ENCODE measurements at regions of chr20 and their contacts with region 1.

Region 1: DNA sequence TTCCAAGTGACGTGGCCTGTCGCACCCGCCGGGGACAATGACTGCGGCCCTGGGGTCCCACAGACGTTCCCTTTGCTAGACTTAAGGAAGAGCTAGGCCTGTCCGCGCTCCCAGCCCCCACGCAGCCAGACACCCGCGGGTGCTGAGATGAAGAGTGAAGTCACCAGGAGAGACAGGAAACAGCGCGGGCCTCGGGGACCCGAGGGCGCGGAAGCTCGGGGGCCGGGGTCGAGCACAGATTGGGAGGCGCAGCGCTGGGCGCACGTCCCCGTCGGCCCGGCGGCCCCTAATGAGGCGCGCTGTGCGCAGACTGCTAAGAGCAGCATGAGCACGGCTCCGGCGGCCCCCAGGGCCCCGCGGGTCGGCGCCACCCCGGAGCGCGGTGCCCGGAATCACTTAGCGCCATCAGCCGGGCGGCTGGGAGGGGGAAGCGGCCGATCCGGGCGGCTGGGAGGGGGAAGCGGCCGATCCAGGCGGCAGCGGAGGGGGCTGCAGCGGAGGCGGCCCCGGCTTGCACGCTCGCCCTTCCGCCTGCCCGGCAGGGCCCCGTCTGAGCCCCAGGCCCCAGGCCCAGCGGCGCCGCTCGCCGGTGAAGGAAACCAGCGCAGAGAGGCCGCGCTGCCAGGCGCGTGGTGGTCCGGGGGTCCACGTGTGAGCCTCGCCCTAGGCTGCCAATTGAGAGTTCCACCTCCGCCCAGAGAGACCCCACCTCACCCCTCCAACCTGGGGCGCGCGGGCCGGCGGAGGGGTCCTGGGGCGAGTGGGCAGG is 8.3 kb upstream of the AVP start:
- DNase-seq: peak; percentile 23 to 76 (median 52)
- ATAC-seq: peak; percentile 39
- H3K4me3 ChIP-seq: peak overlapping the region; percentile 33 to 61
- H3K4me3 Mint-ChIP-seq: peak overlapping the region; percentile 88
- H3K27ac ChIP-seq: peak overlapping the region; percentile 77 to 90
- H3K27ac Mint-ChIP-seq: peak overlapping the region; percentile 100
- H3K4me1 ChIP-seq: peaks cover 43% of the 10 kb centered on the region
- H3K4me1 Mint-ChIP-seq: peaks cover 29% of the 10 kb centered on the region
- H3K27me3 ChIP-seq: peaks cover 0 to 14% of the 10 kb centered on the region in 2 experiments
- H3K27me3 Mint-ChIP-seq: peaks cover 8% of the 10 kb centered on the region
- CTCF ChIP-seq: no peak

Region 2: GRCh38 chr20:3068986-3069900 is 23.6 kb before region 1 on chr20:
- CTCF ChIA-PET with region 1: interaction called, 6 read pairs
- POLR2A ChIA-PET with region 1: interaction called, 11 read pairs
- intact Hi-C with region 1: loop called in 1 of 2 experiments (anchors 1 kb)
- DNase-seq: peak in 6 of 9 experiments; percentile 45 to 73 (median 64)
- ATAC-seq: peak; percentile 59
- H3K4me3 ChIP-seq: no peak overlapping the region
- H3K4me3 Mint-ChIP-seq: no peak overlapping the region
- H3K27ac ChIP-seq: no peak overlapping the region
- H3K27ac Mint-ChIP-seq: no peak overlapping the region
- H3K4me1 ChIP-seq: peaks cover 13% of the 10 kb centered on the region
- H3K4me1 Mint-ChIP-seq: peaks cover 24% of the 10 kb centered on the region
- H3K27me3 ChIP-seq: no peaks in the 10 kb centered on the region
- H3K27me3 Mint-ChIP-seq: no peaks in the 10 kb centered on the region
- CTCF ChIP-seq: peak; percentile 41

Region 3: DNA sequence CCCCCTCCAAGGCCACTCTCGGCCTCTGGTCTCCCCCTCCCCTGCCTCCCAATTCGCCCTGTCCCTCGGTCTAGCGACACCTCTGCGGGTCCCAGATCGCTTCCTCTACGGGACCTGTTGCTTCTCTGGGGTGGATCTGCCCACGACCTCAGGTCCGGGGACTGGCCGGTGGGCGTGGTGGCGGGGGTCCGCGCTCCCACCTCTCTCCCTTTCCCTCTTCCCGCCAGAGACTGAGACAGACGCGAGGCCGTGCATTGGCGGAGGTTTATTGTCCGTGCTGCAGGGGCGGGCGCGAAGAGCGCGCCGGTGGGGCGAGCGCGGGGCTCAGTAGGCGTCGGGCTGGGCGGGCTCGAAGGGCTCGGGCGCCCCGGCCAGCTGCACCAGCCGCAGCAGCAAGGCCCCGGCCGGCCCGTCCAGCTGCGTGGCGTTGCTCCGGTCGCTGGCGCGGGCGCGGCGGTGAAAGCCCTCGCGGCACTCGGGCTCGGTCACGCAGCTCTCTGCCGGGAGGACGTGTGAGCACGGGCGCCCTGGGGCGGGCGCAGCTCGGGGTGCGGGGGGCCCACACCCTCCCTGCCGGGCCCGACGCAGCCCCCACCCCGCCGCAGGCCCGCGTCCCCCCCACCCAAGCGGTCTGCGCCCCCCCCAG is 10.4 kb before region 1 on chr20:
- CTCF ChIA-PET with region 1: interaction called, 5 read pairs
- POLR2A ChIA-PET with region 1: interaction called, 20 read pairs
- intact Hi-C with region 1: loop called (anchors 1 to 2 kb)
- DNase-seq: peak in 1 of 9 experiments; percentile 31
- ATAC-seq: peak; percentile 45
- H3K4me3 ChIP-seq: peak overlapping the region in 1 of 2 experiments; percentile 30
- H3K4me3 Mint-ChIP-seq: peak overlapping the region; percentile 61
- H3K27ac ChIP-seq: no peak overlapping the region
- H3K27ac Mint-ChIP-seq: no peak overlapping the region
- H3K4me1 ChIP-seq: peaks cover 23% of the 10 kb centered on the region
- H3K4me1 Mint-ChIP-seq: peaks cover 16% of the 10 kb centered on the region
- H3K27me3 ChIP-seq: peaks cover 18 to 19% of the 10 kb centered on the region in 2 experiments
- H3K27me3 Mint-ChIP-seq: peaks cover 42% of the 10 kb centered on the region
- CTCF ChIP-seq: no peak

Region 4: DNA sequence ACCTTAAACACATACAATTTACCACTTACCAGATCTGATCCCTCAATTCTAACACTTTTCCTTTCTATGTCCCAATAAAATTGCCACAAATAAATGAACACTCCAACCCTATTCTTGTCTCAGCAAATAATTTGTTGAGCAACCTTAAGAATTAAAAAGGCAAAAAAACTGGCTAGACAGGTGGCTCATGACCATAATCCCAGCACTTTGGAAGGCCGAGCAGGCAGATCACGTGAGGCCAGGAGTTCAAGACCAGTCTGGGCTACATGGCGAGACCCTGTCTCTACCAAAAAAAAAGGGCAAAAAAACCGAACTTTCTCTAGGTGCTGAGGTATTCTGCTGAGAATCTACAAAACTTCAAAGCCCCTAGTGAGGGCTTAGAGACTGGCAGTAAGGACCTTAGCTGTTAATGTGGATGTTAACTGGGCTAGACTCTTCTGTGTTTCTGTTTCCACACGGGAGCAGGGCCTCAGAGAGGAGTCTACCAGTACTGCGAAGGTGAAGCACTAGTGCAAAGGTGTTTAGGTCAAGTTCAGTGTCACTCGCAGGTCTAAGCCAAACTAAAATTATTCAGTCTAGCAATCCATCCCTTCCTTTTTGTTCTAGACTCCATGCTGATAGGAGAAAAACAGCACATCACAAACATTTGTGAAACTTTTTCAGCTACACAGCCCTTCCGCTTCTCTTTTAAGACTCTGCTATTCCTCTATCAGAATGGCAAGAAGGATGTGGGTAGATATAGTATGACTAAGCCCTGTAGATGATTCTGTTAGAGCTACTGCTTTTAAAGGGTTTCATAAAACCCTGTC is 64.2 kb after region 1 on chr20:
- CTCF ChIA-PET with region 1: interaction called, 4 read pairs
- POLR2A ChIA-PET with region 1: interaction called, 7 read pairs
- intact Hi-C with region 1: loop called in 1 of 2 experiments (anchors 1 kb)
- DNase-seq: peak in 1 of 9 experiments; percentile 60
- ATAC-seq: peak; percentile 80
- H3K4me3 ChIP-seq: peak overlapping the region in 1 of 2 experiments; percentile 12
- H3K4me3 Mint-ChIP-seq: peak overlapping the region; percentile 60
- H3K27ac ChIP-seq: peak overlapping the region in 1 of 2 experiments; percentile 58
- H3K27ac Mint-ChIP-seq: peak overlapping the region; percentile 90
- H3K4me1 ChIP-seq: peaks cover 43% of the 10 kb centered on the region
- H3K4me1 Mint-ChIP-seq: peaks cover 60% of the 10 kb centered on the region
- H3K27me3 ChIP-seq: no peaks in the 10 kb centered on the region
- H3K27me3 Mint-ChIP-seq: no peaks in the 10 kb centered on the region
- CTCF ChIP-seq: no peak